ENCODE measurements at regions of chr17 and their contacts with region 1.

Region 1: DNA sequence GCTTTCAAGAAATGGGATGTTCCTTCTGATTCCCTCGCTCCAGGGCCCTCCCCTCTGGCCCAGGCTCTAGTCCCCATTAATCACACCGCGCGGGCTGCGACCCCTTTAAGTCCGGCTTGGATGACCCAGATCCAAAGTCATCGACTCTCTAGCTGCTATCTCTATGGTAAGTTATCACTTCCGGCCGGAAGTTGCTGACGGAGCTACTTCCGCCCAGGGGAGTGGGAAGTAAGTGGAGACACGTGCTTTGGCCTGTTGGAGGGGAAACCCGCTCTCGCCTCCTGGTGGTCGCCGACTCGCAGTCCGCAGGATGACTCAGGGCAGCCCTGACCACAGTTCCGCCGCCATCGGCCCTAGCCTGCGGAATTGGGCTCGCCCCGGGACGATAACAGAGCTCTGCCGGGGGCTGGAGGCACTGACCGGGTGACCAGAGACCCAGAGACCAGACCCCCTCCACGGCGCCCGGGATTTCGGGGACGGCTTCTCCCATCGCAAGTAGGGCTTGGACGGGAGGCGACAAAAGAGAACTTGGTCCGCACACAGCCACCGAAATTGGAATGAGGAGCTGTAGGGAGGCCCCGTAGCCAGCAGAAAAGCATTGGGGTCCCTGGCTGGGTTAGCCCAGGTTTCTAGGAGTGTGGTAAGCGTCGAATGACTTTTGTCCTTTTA is 52.2 kb upstream of the SEC14L1 start:
- DNase-seq: peak; percentile 97
- H3K4me3 Mint-ChIP-seq: peak overlapping the region; percentile 93
- H3K27ac Mint-ChIP-seq: peak overlapping the region; percentile 97
- H3K4me1 Mint-ChIP-seq: peaks cover 44% of the 10 kb centered on the region
- H3K27me3 Mint-ChIP-seq: no peaks in the 10 kb centered on the region

Region 2: DNA sequence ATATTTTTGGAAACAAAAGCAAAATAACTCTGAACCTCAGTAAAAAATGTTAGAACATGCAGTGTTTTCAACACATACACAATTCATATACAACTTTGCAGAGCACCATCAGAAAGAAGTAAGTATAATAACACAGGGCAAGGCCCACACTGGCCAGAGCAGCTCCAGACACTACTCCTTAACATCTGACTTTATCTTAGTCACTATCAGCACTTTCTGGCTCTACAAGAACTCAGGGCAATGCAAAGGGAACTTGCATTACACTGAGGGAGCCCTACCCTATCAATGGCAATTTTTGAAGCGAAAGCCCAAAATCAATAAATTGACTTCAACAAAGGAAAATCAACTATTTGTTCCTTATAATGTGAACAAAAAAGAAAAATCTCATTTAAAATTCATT is 864.8 kb before region 1 on chr17:
- intact Hi-C with region 1: no loop called
- DNase-seq: no peak
- H3K4me3 Mint-ChIP-seq: no peak overlapping the region
- H3K27ac Mint-ChIP-seq: no peak overlapping the region
- H3K4me1 Mint-ChIP-seq: peaks cover 19% of the 10 kb centered on the region
- H3K27me3 Mint-ChIP-seq: no peaks in the 10 kb centered on the region

Region 3: DNA sequence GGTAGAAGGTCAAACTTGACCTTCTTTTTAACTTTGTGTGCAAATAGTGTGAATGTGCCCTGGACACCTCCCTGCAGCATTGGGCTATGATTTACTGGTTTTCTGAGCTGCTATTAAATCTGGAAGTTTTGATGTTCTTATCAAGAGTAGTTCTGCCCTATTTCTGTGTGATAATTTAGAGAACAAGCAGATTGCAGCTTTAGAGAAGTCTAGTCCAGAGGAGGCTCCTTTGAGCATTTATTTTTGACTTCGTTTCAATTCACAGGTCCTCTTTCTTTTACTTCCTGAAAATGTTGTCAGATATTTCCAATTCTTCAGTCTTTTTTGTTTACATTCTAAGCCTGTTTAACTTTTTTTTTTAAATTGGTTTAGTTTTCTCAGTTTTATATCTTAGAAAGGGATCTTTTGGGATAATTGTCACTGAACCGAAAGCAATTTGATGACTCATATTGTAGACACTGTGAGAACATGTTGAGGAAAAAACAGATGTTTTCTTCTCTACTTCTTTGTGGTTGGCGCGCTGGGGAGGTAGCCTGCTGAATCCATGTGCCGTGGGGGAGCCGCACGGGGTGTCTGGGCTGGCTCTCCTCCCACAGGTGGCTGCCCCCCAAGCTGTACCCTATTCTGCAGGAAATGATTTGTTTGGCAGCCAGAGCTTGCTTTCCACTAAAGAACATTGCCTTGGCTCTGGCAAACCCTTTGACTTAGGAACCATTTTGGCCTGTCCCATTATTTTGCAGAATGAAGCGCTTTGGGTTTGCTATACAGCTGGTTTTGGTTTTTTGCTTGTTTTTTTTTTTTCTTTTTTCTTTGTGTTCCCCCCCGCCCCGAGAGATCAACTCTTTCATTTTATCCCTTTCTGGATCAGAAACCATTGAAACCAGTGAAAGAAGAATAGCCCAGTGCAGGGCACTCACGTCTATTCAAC is 297.3 kb before region 1 on chr17:
- intact Hi-C with region 1: no loop called
- DNase-seq: peak; percentile 86
- H3K4me3 Mint-ChIP-seq: peak overlapping the region; percentile 58
- H3K27ac Mint-ChIP-seq: peak overlapping the region; percentile 52
- H3K4me1 Mint-ChIP-seq: peaks cover 27% of the 10 kb centered on the region
- H3K27me3 Mint-ChIP-seq: peaks cover 2% of the 10 kb centered on the region

Region 4: DNA sequence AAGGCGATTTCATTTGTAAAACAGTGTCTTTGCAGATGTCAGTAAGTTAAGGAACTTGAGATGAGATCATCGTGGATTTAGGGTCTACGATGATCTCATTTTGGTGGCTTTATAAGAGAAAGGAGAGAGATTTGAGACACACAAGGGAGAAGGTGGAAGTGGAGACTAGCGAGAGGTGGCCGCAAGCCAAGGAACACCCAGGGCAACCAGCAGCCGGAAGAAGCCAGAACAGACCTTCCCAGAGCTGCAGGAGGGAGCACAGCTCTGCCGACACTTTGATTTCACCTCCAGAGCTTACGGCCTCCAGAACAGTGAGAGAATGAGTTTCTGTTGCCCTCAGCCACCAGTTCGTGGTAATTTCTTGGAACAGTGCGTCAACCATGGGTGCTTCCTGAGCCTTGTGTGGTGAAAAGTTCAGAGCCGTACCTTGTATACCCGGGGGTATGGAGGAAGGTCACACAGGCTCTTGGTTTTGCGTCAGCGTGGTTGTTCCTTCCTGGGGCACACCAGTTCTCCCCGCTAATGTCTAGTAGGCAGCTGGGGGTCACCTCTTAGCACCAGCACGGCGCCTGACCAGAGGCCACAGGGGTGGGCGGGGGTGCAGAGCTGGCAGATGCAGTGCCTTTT is 39.3 kb after region 1 on chr17:
- intact Hi-C with region 1: loop called (anchors 5 kb)
- DNase-seq: peak; percentile 94
- H3K4me3 Mint-ChIP-seq: peak overlapping the region; percentile 73
- H3K27ac Mint-ChIP-seq: peak overlapping the region; percentile 93
- H3K4me1 Mint-ChIP-seq: peaks cover 43% of the 10 kb centered on the region
- H3K27me3 Mint-ChIP-seq: no peaks in the 10 kb centered on the region

Region 5: DNA sequence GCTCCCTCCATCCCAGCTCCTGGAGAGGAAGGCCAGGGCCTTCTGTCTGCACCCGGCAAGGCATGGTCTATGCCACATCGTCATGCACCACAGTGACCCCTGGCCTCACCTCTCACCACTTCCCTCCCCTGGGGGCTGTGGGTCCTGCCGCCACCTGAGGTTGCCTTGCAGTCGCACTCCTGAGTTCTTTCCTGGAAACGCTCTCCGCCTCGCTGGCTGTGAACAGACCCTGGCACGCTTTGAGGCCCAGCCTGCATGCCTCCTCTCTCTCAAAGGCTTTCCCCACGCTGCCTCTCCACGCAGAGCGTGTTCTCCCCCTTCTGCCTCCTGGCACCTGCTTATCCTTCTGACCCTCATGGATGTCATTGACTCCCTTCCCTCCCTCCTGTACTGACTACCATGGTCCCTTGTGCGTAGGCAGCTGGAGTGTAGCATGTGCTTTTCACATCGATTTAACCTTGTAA is 97.6 kb after region 1 on chr17:
- intact Hi-C with region 1: loop called (anchors 2 kb)
- DNase-seq: peak; percentile 75
- H3K4me3 Mint-ChIP-seq: no peak overlapping the region
- H3K27ac Mint-ChIP-seq: no peak overlapping the region
- H3K4me1 Mint-ChIP-seq: peaks cover 54% of the 10 kb centered on the region
- H3K27me3 Mint-ChIP-seq: no peaks in the 10 kb centered on the region